Activated T-helper 2 cell treated with anti-CD3 and anti-CD28 coated beads, Interferon-gamma antibody, Interleukin-2, Interleukin-4, amounts not matched to agents 10 μg/mL and 5 μg/mL and 100 μg/mL, durations not matched to agents 14 hours and 24 hours and 36 hours (primary cell): ENCODE measurements at regions of chr11 and their contacts with region 1.

Region 1: GRCh38 chr11:83071567-83072349 is at the start of gene RAB30:
- DNase-seq: peak; percentile 93
- H3K4me3 Mint-ChIP-seq: no peak within 1 kb of the TSS
- H3K27ac Mint-ChIP-seq: no peak within 1 kb of the TSS
- H3K4me1 Mint-ChIP-seq: peaks cover 41% of the 10 kb centered on the region
- H3K27me3 Mint-ChIP-seq: no peaks in the 10 kb centered on the region
- total RNA-seq, gene RAB30: 29.1 and 31.5 TPM in 2 replicates

Region 2: GRCh38 chr11:82858556-82859091 is 213.1 kb before region 1 on chr11:
- intact Hi-C with region 1: no loop called
- DNase-seq: no peak
- H3K4me3 Mint-ChIP-seq: no peak overlapping the region
- H3K27ac Mint-ChIP-seq: no peak overlapping the region
- H3K4me1 Mint-ChIP-seq: peaks cover 12% of the 10 kb centered on the region
- H3K27me3 Mint-ChIP-seq: no peaks in the 10 kb centered on the region

Region 3: GRCh38 chr11:82900277-82901164 is 171.2 kb before region 1 on chr11 and contains the start of gene PRCP:
- intact Hi-C with region 1: loop called (anchors 1 kb)
- DNase-seq: peak; percentile 94
- H3K4me3 Mint-ChIP-seq: peak within 1 kb of the TSS; percentile 100
- H3K27ac Mint-ChIP-seq: peak within 1 kb of the TSS; percentile 100
- H3K4me1 Mint-ChIP-seq: peaks cover 55% of the 10 kb centered on the region
- H3K27me3 Mint-ChIP-seq: no peaks in the 10 kb centered on the region
- total RNA-seq, gene PRCP: 23.5 and 27.5 TPM in 2 replicates

Region 4: DNA sequence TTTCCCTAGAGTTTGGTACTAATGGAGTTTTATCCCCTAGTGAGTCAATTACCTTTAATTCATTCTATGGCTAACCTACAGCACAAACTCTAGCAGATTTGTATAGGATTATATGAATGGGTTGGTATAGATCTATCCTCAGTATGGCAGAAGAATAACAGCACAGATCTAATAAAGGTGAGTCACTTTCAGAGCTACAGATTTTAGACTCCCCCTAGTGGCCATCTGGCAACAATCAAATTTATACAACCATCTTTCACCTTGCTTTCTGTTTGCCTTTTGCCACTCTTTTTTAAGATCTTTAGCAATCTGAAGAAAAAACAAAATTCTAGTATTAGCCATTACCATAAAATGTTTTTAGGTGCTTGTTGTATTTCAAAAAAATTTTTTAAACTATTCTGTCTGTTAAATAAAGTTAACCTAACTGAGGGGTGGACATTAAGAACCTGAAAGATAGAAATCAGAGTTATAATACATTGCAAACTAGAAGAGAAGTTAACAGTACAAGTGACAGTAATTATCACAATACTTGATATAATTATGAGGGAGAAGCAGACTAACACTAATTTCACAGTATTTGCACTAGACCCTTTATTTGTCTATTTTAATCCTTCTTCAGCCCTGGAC is 144.4 kb before region 1 on chr11:
- intact Hi-C with region 1: loop called (anchors 5 kb)
- DNase-seq: no peak
- H3K4me3 Mint-ChIP-seq: no peak overlapping the region
- H3K27ac Mint-ChIP-seq: no peak overlapping the region
- H3K4me1 Mint-ChIP-seq: peaks cover 20% of the 10 kb centered on the region
- H3K27me3 Mint-ChIP-seq: no peaks in the 10 kb centered on the region

Region 5: GRCh38 chr11:82978422-82979099 is 93.2 kb before region 1 on chr11:
- intact Hi-C with region 1: loop called (anchors 1 kb)
- DNase-seq: no peak
- H3K4me3 Mint-ChIP-seq: peak overlapping the region; percentile 9
- H3K27ac Mint-ChIP-seq: peak overlapping the region; percentile 73
- H3K4me1 Mint-ChIP-seq: peaks cover 42% of the 10 kb centered on the region
- H3K27me3 Mint-ChIP-seq: no peaks in the 10 kb centered on the region

Region 6: DNA sequence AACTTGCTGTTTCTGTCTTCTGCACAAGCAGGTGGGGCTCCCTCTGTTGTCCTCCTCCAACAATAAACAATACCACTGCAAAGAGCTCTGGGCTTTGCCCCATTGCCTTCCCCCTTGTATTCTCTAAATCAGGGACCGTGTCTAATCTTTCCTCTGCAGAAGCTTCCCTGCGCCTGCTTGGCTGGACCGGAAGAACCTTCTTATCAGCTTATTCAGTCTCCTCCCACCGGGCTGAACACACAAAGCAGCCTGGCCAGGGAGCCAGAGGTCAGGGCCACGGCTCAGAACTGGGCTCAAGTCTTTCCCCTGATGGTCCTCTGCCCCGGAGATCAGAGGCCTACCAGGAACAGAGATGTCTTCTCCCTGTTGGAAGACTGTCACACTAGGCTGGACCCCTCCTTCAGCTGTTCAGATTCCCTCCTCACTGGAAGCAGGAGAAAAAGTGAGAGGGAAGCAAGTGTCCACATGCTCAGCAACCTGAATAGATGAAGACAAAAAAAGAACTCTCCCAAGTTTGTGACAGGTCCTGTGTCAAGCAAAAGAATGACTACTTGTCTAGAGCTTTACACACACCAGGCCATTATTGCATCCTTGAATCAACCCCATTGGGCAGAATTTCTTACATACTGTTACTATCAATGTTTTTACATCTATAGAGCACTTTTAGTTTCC is 63.7 kb before region 1 on chr11:
- intact Hi-C with region 1: loop called (anchors 1 kb)
- DNase-seq: no peak
- H3K4me3 Mint-ChIP-seq: peak overlapping the region; percentile 61
- H3K27ac Mint-ChIP-seq: peak overlapping the region; percentile 65
- H3K4me1 Mint-ChIP-seq: peaks cover 47% of the 10 kb centered on the region
- H3K27me3 Mint-ChIP-seq: no peaks in the 10 kb centered on the region

Region 7: DNA sequence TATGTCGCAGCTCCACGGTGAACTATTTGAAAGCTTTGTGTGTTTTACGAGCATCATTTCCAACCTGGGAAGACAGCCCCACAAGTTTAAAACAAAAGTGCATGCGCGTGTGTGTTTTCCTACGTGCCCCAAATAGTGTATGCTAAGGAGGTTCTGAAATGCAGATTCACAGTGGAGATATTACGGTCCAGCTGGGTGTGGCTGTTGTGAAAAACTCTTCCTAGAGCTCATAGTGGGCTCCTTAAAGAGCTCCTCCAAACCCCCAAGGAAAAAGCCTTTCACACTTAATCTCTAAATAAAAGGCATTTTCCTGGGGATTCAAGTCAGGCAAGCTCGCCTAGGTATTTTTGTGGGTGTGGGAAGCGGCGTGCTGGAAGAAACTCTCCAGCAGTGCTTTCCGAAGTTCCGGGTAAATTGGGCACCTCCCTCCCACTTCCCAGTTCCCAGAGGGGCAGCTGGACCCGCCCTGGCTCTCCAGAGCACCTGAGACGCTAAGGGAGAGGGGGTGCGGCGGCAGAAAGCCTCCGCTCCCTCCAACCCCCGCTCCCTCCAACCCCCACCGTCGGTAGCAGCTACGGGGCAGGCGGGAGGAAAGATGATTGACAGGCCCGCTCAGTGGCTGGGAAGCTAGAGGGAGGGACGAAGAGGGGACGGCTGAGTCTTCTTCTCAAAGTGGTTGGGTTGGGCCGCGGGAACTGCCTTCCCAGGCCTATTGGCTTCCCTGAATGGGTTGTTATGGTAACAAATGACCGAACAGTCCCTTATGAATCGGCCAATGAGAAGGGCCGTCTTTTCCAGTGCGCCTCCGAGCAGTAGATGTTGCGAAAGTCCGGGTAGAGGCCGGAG is 84.6 kb after region 1 on chr11:
- intact Hi-C with region 1: loop called (anchors 1 kb)
- DNase-seq: peak; percentile 96
- H3K4me3 Mint-ChIP-seq: peak overlapping the region; percentile 99
- H3K27ac Mint-ChIP-seq: peak overlapping the region; percentile 100
- H3K4me1 Mint-ChIP-seq: peaks cover 24% of the 10 kb centered on the region
- H3K27me3 Mint-ChIP-seq: no peaks in the 10 kb centered on the region

Region 8: GRCh38 chr11:83265331-83265730 is 193.6 kb after region 1 on chr11:
- intact Hi-C with region 1: no loop called
- DNase-seq: no peak
- H3K4me3 Mint-ChIP-seq: no peak overlapping the region
- H3K27ac Mint-ChIP-seq: no peak overlapping the region
- H3K4me1 Mint-ChIP-seq: peaks cover 14% of the 10 kb centered on the region
- H3K27me3 Mint-ChIP-seq: no peaks in the 10 kb centered on the region

Region 9: GRCh38 chr11:83285771-83286528 is 214.2 kb after region 1 on chr11 and contains the start of gene CCDC90B:
- intact Hi-C with region 1: loop called (anchors 2 kb)
- DNase-seq: peak; percentile 91
- H3K4me3 Mint-ChIP-seq: peak within 1 kb of the TSS; percentile 89
- H3K27ac Mint-ChIP-seq: peak within 1 kb of the TSS; percentile 96
- H3K4me1 Mint-ChIP-seq: peaks cover 26% of the 10 kb centered on the region
- H3K27me3 Mint-ChIP-seq: peaks cover 3% of the 10 kb centered on the region
- total RNA-seq, gene CCDC90B: 25.4 and 27.2 TPM in 2 replicates